ENCODE measurements at regions of chr22 and their contacts with region 1.

Region 1: DNA sequence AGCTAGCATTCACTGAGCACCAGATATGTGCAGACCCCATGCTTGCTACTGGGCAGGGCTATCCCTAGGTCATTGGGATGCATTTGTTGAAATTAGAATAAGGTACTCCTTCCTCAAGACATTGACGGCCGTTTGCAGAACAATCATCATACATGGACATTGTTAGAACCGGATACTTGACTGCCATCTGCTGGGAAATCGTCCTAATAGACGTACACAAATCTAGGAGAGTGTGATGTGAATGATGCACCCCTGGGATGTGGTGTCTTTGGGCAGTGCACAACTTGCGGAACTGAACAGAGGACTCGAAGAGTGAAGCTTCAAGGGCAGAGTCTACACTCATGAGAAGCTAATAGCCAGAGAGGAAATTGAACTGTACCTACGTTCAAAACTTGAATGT is 35.9 kb downstream of the MYO18B start:
- DNase-seq: peak; percentile 51
- CTCF ChIP-seq: peak; percentile 28

Region 2: GRCh38 chr22:25545672-25546071 is 232.2 kb before region 1 on chr22:
- CTCF ChIA-PET with region 1: interaction called, 22 read pairs
- POLR2A ChIA-PET with region 1: no interaction called
- DNase-seq: no peak
- CTCF ChIP-seq: no peak

Region 3: GRCh38 chr22:26330966-26331625 is 553.2 kb after region 1 on chr22:
- CTCF ChIA-PET with region 1: interaction called, 52 read pairs
- POLR2A ChIA-PET with region 1: no interaction called
- DNase-seq: peak; percentile 77
- CTCF ChIP-seq: peak; percentile 92